ENCODE measurements at regions of chr5 and their contacts with region 1.

Region 1: DNA sequence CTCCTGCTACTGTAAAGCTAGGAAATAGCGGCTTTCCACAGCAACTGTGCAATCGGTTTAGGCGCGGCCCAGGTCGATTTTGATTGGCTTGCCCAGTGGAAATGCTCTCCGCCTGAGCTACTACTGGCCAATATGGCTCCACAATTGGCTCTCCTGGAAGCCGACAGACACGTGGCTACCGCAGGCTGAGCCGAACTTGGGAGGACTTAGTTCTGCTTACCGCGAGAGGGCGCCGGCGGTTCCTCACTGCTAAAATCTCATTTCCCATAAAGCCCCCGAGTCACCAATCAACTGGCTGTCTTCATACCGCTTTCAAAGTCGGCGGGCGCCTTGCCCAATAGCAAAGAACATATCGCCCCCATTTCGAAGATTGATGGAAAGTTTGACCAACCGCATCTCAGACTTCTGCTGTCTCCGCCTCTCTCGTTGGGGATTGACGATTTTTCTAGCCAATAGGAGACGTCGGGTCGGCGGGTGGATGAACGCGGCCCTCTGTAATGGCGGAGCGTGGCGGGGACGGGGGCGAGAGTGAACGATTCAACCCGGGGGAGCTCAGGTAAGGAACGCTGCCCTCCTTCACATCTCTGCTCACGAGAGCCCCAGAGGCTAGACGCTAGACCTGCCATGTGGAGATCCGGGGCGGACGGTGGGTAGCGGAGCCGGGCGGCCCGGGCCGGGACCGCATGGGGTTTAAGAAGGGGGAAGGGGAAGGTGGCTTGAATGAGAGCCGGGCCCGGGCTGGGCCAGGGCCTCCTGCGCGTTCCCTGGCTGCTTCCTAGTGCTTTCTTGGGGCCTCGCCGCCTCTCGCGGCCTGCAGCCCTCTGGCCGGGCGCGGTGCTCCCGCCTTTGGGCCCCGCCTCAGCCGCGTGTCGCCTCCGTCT is at the start of gene TCERG1:
- DNase-seq: peak; percentile 93 to 99 (median 96)
- ATAC-seq: peak; percentile 93
- H3K4me3 ChIP-seq: peak within 1 kb of the TSS; percentile 99
- H3K4me3 Mint-ChIP-seq: peak within 1 kb of the TSS; percentile 97
- H3K27ac ChIP-seq: peak within 1 kb of the TSS; percentile 86 to 96
- H3K27ac Mint-ChIP-seq: peak within 1 kb of the TSS; percentile 87
- H3K4me1 ChIP-seq: peaks cover 26% of the 10 kb centered on the region
- H3K4me1 Mint-ChIP-seq: peaks cover 48% of the 10 kb centered on the region
- H3K27me3 ChIP-seq: no peaks in the 10 kb centered on the region
- H3K27me3 Mint-ChIP-seq: no peaks in the 10 kb centered on the region
- CTCF ChIP-seq: peak; percentile 69
- total RNA-seq, gene TCERG1: 88.0 to 88.7 TPM

Region 2: GRCh38 chr5:146179696-146180095 is 267.4 kb before region 1 on chr5:
- CTCF ChIA-PET with region 1: no interaction called
- POLR2A ChIA-PET with region 1: interaction called, 5 read pairs
- intact Hi-C with region 1: loop called in 1 of 2 experiments (anchors 5 kb)
- DNase-seq: no peak
- ATAC-seq: no peak
- H3K4me3 ChIP-seq: no peak overlapping the region
- H3K4me3 Mint-ChIP-seq: peak overlapping the region; percentile 42
- H3K27ac ChIP-seq: no peak overlapping the region
- H3K27ac Mint-ChIP-seq: no peak overlapping the region
- H3K4me1 ChIP-seq: peaks cover 32% of the 10 kb centered on the region
- H3K4me1 Mint-ChIP-seq: peaks cover 31% of the 10 kb centered on the region
- H3K27me3 ChIP-seq: no peaks in the 10 kb centered on the region
- H3K27me3 Mint-ChIP-seq: no peaks in the 10 kb centered on the region
- CTCF ChIP-seq: no peak

Region 3: DNA sequence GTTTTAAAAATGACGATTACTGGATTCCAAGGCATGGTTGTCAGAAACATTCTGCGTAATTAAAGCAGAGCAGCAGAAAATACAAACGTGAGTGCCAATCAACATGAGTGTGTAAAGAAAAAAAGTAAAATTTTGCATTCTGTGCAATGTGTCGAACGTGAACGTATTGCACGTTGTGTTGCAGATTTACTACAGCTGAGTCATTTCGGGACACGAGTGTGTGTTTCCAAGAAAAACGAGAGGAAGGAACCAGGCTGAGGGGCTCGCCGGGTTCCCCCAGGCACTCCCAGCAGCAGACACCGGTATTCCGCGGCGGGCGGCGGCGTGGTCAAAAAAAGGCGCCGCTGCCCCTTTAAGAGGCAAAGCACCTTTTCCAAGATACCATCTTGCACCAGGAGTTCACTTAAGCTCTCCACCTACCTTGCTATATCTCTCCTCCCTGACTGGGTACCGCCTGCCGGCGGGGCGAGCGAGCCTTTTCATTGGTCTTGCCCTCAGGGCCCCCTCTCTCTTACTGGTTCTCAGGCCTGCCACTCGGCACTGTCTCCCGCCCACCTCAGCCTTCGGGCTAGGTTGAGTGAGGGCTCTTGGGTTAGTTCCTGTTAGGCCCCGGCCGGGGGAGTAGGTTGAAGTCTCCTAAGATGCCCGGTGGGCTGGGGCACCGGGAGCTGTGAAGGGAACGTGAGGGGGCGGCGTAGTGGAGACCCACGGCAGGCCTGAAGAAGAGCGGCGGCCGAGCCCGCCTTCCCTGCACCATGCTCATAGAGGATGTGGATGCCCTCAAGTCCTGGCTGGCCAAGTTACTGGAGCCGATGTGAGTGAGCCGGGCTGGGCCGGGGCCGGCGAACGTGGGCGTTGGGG is 243.9 kb before region 1 on chr5 and contains the start of gene RBM27:
- CTCF ChIA-PET with region 1: no interaction called
- POLR2A ChIA-PET with region 1: no interaction called
- intact Hi-C with region 1: loop called (anchors 5 kb)
- DNase-seq: peak; percentile 94 to 98 (median 96)
- ATAC-seq: peak; percentile 99
- H3K4me3 ChIP-seq: peak within 1 kb of the TSS; percentile 94
- H3K4me3 Mint-ChIP-seq: no peak within 1 kb of the TSS
- H3K27ac ChIP-seq: peak within 1 kb of the TSS; percentile 69 to 80
- H3K27ac Mint-ChIP-seq: no peak within 1 kb of the TSS
- H3K4me1 ChIP-seq: peaks cover 22% of the 10 kb centered on the region
- H3K4me1 Mint-ChIP-seq: peaks cover 23% of the 10 kb centered on the region
- H3K27me3 ChIP-seq: no peaks in the 10 kb centered on the region
- H3K27me3 Mint-ChIP-seq: no peaks in the 10 kb centered on the region
- CTCF ChIP-seq: no peak
- total RNA-seq, gene RBM27: 29.7 to 33.2 TPM

Region 4: GRCh38 chr5:146363161-146363874 is 83.8 kb before region 1 on chr5:
- CTCF ChIA-PET with region 1: no interaction called
- POLR2A ChIA-PET with region 1: no interaction called
- intact Hi-C with region 1: no loop called
- DNase-seq: peak in 2 of 14 experiments; percentile 11 to 18
- ATAC-seq: no peak
- H3K4me3 ChIP-seq: no peak overlapping the region
- H3K4me3 Mint-ChIP-seq: no peak overlapping the region
- H3K27ac ChIP-seq: no peak overlapping the region
- H3K27ac Mint-ChIP-seq: no peak overlapping the region
- H3K4me1 ChIP-seq: no peaks in the 10 kb centered on the region
- H3K4me1 Mint-ChIP-seq: no peaks in the 10 kb centered on the region
- H3K27me3 ChIP-seq: peaks cover 5 to 11% of the 10 kb centered on the region in 2 experiments
- H3K27me3 Mint-ChIP-seq: peaks cover 58% of the 10 kb centered on the region
- CTCF ChIP-seq: no peak

Region 5: DNA sequence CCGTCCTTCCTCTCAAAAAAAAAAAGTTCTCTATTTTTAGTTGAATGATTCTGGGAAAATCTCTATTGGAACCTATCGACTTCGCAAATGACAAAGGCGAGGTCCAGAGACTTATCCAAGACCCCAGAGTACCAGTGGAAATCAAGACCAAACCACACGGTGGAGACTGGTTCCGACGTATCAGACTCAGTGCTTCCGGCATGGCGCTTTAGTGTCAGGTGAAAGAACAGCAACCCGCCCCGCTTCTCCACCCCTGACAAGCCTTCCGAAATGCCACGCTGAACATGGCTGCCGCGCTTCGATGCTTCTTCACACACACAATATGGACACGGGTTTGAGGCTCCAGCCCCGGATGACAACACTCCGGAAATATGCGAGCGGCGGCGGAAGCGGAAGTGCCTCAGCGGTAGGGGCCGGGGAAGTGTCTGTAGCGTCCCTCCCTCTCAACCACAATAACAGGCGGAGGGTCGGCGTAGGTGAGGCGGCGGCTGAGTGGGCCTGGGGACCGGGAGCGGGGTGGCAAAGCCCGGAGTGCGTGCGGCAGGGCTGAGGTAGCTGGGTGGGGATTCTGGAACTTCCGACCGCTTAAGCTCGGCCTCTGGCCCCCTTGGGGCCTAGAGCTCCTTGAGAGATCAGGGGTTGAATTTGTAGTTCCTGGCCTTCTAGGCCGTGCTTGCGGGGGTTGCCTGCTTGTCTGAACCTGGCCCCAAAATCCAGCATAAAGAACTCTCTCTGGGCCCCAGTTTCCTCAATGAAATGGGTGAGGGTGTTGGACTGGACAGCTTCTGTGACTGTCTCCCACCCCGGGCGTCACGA is 1936.7 kb after region 1 on chr5 and contains the start of gene FBXO38:
- CTCF ChIA-PET with region 1: no interaction called
- POLR2A ChIA-PET with region 1: no interaction called
- intact Hi-C with region 1: loop called in 1 of 2 experiments (anchors 5 kb)
- DNase-seq: peak; percentile 93 to 99 (median 97)
- ATAC-seq: peak; percentile 94
- H3K4me3 ChIP-seq: peak within 1 kb of the TSS; percentile 84
- H3K4me3 Mint-ChIP-seq: peak within 1 kb of the TSS; percentile 89
- H3K27ac ChIP-seq: peak within 1 kb of the TSS; percentile 92 to 96
- H3K27ac Mint-ChIP-seq: peak within 1 kb of the TSS; percentile 96
- H3K4me1 ChIP-seq: peaks cover 25% of the 10 kb centered on the region
- H3K4me1 Mint-ChIP-seq: peaks cover 71% of the 10 kb centered on the region
- H3K27me3 ChIP-seq: no peaks in the 10 kb centered on the region
- H3K27me3 Mint-ChIP-seq: no peaks in the 10 kb centered on the region
- CTCF ChIP-seq: no peak
- total RNA-seq, gene FBXO38: 45.7 to 47.3 TPM

Measured in CD4-positive, alpha-beta T cell (primary cell).